Activated CD4-positive, alpha-beta memory T cell treated with anti-CD3 and anti-CD28 coated beads, Interleukin-2, amount 10 ng/mL, durations not matched to agents 7 days and 5 days (primary cell): ENCODE measurements at regions of chr17 and their contacts with region 1.

Region 1: GRCh38 chr17:42019509-42020404 is at the start of gene NKIRAS2:
- DNase-seq: peak; percentile 95
- H3K4me3 Mint-ChIP-seq: peak within 1 kb of the TSS; percentile 99
- H3K27ac Mint-ChIP-seq: peak within 1 kb of the TSS; percentile 97
- H3K4me1 Mint-ChIP-seq: peaks cover 59% of the 10 kb centered on the region
- H3K27me3 Mint-ChIP-seq: no peaks in the 10 kb centered on the region
- total RNA-seq, gene NKIRAS2: 21.3 to 22.7 TPM

Region 2: GRCh38 chr17:41688699-41689496 is 330.9 kb before region 1 on chr17 and contains the start of gene EIF1:
- CTCF ChIA-PET with region 1: no interaction called
- POLR2A ChIA-PET with region 1: interaction called, 10 read pairs
- DNase-seq: peak; percentile 100
- H3K4me3 Mint-ChIP-seq: peak within 1 kb of the TSS; percentile 88
- H3K27ac Mint-ChIP-seq: peak within 1 kb of the TSS; percentile 98
- H3K4me1 Mint-ChIP-seq: peaks cover 39% of the 10 kb centered on the region
- H3K27me3 Mint-ChIP-seq: no peaks in the 10 kb centered on the region
- total RNA-seq, gene EIF1: 933 to 950 TPM

Region 3: GRCh38 chr17:41750862-41751261 is 268.9 kb before region 1 on chr17:
- CTCF ChIA-PET with region 1: no interaction called
- POLR2A ChIA-PET with region 1: no interaction called
- DNase-seq: no peak
- H3K4me3 Mint-ChIP-seq: no peak overlapping the region
- H3K27ac Mint-ChIP-seq: no peak overlapping the region
- H3K4me1 Mint-ChIP-seq: no peaks in the 10 kb centered on the region
- H3K27me3 Mint-ChIP-seq: peaks cover 7% of the 10 kb centered on the region

Region 4: GRCh38 chr17:41894791-41895331 is 124.9 kb before region 1 on chr17:
- CTCF ChIA-PET with region 1: no interaction called
- POLR2A ChIA-PET with region 1: no interaction called
- DNase-seq: no peak
- H3K4me3 Mint-ChIP-seq: no peak overlapping the region
- H3K27ac Mint-ChIP-seq: no peak overlapping the region
- H3K4me1 Mint-ChIP-seq: no peaks in the 10 kb centered on the region
- H3K27me3 Mint-ChIP-seq: no peaks in the 10 kb centered on the region

Region 5: DNA sequence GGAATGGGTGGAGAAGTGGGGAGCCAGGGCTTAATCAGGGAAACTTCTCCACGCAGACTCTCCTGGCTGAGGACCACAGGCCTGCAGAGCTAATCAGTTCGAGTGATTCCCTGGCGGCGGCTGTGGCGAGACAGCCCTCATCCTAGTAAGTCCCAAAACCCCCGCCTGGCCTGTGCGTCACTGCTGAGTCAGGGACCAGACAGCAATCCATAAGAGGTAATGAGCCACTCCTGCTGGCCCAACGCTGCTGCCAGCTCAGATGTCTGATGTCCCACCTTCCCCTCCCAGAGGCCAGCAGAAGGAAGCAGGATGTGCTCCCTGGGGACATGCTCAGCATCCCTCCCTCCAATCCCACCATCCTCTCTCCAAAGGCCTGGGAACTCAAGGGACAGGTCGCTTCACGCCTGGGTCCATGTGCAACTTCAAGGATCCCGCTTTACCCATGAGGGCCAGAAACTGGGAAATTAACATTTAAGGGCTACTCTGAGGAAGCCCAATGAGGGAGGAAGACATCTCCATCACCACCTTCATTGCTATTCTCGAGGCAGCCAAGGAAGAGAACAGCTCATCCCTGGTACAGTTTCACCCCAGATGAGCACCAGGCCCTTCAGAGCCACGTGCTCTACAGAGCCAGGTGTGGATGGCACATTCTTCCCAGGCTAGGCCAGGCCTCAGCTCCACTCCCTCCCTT is 108.9 kb before region 1 on chr17:
- CTCF ChIA-PET with region 1: no interaction called
- POLR2A ChIA-PET with region 1: no interaction called
- DNase-seq: no peak
- H3K4me3 Mint-ChIP-seq: no peak overlapping the region
- H3K27ac Mint-ChIP-seq: no peak overlapping the region
- H3K4me1 Mint-ChIP-seq: peaks cover 21% of the 10 kb centered on the region
- H3K27me3 Mint-ChIP-seq: no peaks in the 10 kb centered on the region

Region 6: DNA sequence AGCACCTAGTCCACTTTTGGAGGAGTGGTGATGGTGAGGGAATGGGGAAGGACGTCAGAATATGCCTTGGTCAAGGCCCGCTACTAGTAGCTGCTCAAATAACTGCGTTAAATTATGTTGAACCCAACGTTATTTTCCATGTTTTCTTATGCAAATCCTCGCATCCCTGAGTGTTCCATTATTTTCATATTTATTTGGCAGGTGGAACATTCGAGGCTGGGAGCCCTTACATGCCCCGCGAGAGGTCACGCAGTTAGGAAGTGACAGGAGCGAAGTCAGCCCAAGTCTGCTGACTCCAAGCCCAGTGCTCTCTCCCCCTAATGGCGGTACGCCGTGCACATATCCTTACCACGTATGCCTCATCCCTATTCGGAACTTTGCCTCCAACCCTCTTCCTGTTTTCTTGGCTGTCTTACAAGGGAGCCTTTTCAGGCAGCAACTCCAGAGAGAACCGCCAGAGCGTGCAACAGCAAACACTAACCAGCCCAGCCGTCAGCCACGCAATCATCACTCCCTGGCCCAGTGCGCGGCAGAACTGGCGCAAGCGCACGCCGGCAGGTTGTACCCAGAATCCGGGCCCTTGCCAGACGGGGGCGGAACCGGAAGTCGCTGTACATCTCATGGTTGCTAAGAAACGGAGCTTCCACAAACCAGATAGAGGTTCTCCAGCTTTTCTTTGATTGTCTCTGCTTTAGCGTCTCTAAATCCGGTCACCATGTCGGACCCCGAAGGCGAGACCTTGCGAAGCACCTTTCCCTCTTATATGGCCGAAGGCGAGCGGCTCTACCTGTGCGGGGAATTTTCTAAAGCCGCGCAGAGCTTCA is 89.5 kb before region 1 on chr17 and contains the start of gene ODAD4:
- CTCF ChIA-PET with region 1: interaction called, 6 read pairs
- POLR2A ChIA-PET with region 1: interaction called, 29 read pairs
- DNase-seq: peak; percentile 97
- H3K4me3 Mint-ChIP-seq: peak within 1 kb of the TSS; percentile 95
- H3K27ac Mint-ChIP-seq: peak within 1 kb of the TSS; percentile 96
- H3K4me1 Mint-ChIP-seq: peaks cover 60% of the 10 kb centered on the region
- H3K27me3 Mint-ChIP-seq: no peaks in the 10 kb centered on the region
- total RNA-seq, gene ODAD4: 1.7 to 2.0 TPM

Region 7: GRCh38 chr17:42002792-42003301 is 16.9 kb before region 1 on chr17:
- CTCF ChIA-PET with region 1: interaction called, 4 read pairs
- POLR2A ChIA-PET with region 1: interaction called, 12 read pairs
- DNase-seq: no peak
- H3K4me3 Mint-ChIP-seq: no peak overlapping the region
- H3K27ac Mint-ChIP-seq: no peak overlapping the region
- H3K4me1 Mint-ChIP-seq: peaks cover 8% of the 10 kb centered on the region
- H3K27me3 Mint-ChIP-seq: no peaks in the 10 kb centered on the region

Region 8: GRCh38 chr17:42112552-42113176 is 92.9 kb after region 1 on chr17 and contains the start of gene DHX58:
- CTCF ChIA-PET with region 1: interaction called, 70 read pairs
- POLR2A ChIA-PET with region 1: interaction called, 237 read pairs
- DNase-seq: peak; percentile 87
- H3K4me3 Mint-ChIP-seq: peak within 1 kb of the TSS; percentile 91
- H3K27ac Mint-ChIP-seq: peak within 1 kb of the TSS; percentile 98
- H3K4me1 Mint-ChIP-seq: peaks cover 72% of the 10 kb centered on the region
- H3K27me3 Mint-ChIP-seq: no peaks in the 10 kb centered on the region
- total RNA-seq, gene DHX58: 97.0 to 97.3 TPM

Region 9: GRCh38 chr17:42153919-42154742 is 134.4 kb after region 1 on chr17:
- CTCF ChIA-PET with region 1: interaction called, 7 read pairs
- POLR2A ChIA-PET with region 1: interaction called, 16 read pairs
- DNase-seq: no peak
- H3K4me3 Mint-ChIP-seq: peak overlapping the region; percentile 92
- H3K27ac Mint-ChIP-seq: peak overlapping the region; percentile 86
- H3K4me1 Mint-ChIP-seq: peaks cover 45% of the 10 kb centered on the region
- H3K27me3 Mint-ChIP-seq: no peaks in the 10 kb centered on the region

Region 10: GRCh38 chr17:42171831-42172230 is 152.1 kb after region 1 on chr17:
- CTCF ChIA-PET with region 1: no interaction called
- POLR2A ChIA-PET with region 1: no interaction called
- DNase-seq: no peak
- H3K4me3 Mint-ChIP-seq: no peak overlapping the region
- H3K27ac Mint-ChIP-seq: no peak overlapping the region
- H3K4me1 Mint-ChIP-seq: peaks cover 1% of the 10 kb centered on the region
- H3K27me3 Mint-ChIP-seq: peaks cover 1% of the 10 kb centered on the region

Region 11: DNA sequence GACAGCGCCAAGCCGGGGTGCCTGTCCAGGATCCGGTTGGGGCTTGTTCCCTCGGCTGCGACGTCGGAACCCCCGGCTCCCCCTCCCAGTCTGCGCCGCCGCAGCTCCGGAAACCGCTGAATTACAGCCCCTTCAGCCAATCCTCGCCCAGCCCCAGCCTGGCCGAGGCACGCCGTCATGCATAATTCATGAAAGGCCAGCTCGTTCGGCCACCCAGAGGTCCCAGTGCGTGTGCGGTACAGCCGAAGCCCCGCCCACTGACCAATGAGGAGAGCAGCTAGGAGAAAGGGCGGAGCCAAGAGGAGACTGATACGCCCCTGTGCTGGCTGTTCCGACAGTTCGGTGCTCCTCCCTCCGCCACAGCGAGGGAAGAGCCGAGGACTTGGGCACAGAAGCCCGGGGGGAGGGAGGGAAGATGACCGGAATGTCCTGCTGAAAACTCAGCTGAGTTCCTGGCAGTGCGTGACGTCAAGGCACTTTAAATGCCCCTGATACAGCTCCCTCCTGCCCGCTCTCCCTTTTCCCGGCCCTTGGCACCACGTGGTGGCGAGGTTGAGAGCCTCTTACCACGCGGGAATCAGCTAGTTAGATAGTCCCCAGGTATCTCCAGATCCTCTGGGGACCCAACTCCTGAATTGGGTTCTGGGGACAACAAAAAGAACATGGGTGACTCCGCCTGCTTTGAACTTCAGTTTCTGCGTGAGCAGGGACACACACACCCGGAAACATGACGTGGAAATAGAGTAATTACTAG is 368.8 kb after region 1 on chr17 and contains the start of gene STAT3:
- CTCF ChIA-PET with region 1: no interaction called
- POLR2A ChIA-PET with region 1: interaction called, 14 read pairs
- DNase-seq: peak; percentile 100
- H3K4me3 Mint-ChIP-seq: peak within 1 kb of the TSS; percentile 90
- H3K27ac Mint-ChIP-seq: peak within 1 kb of the TSS; percentile 98
- H3K4me1 Mint-ChIP-seq: peaks cover 46% of the 10 kb centered on the region
- H3K27me3 Mint-ChIP-seq: no peaks in the 10 kb centered on the region
- total RNA-seq, gene STAT3: 130 to 135 TPM